K562 (cell line): ENCODE measurements at regions of chr14 and their contacts with region 1.

Region 1: DNA sequence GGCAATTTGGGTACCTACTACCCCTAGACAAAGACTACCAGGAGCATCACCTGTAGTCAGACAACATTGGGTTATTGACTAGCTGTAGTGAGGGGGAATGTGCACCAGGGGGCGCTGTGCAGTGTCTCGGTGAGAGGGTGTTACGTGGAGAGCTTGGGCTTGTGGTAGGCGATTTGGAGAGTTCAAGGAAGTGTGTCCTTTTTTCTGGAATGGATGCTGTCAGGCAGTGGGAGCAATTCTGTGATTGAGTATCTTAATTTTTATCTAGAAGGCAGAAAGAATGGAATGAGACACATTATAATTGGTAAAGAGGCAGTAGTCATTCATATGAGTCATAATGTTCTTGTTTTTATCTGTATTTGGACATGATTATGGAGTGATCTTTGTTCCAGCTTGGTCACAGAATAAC is 187.7 kb downstream of the GALC start:
- DNase-seq: peak; percentile 21 to 43 (median 30)
- ATAC-seq: 0 out of 3 replicates have a peak, but pooled peaks have one; percentile 48
- H3K4me3 ChIP-seq: no peak overlapping the region
- H3K27ac ChIP-seq: no peak overlapping the region
- H3K4me1 ChIP-seq: no peaks in the 10 kb centered on the region
- H3K27me3 ChIP-seq: no peaks in the 10 kb centered on the region
- CTCF ChIP-seq: peak; percentile 20 to 59 (median 28); a peak in 5 of 6 replicates
- EP300 ChIP-seq: no peak
- POLR2A ChIP-seq: no peak
- RAD21 ChIP-seq: 0 out of 4 replicates have a peak, but pooled peaks of 1 of the 2 experiments have one; percentile 5

Region 2: GRCh38 chr14:87667659-87668058 is 137.7 kb before region 1 on chr14:
- CTCF ChIA-PET with region 1: no interaction called
- POLR2A ChIA-PET with region 1: no interaction called
- in situ Hi-C with region 1: no loop called
- intact Hi-C with region 1: no loop called
- DNase-seq: no peak
- ATAC-seq: no peak
- H3K4me3 ChIP-seq: no peak overlapping the region
- H3K27ac ChIP-seq: no peak overlapping the region
- H3K4me1 ChIP-seq: no peaks in the 10 kb centered on the region
- H3K27me3 ChIP-seq: no peaks in the 10 kb centered on the region
- CTCF ChIP-seq: no peak
- EP300 ChIP-seq: no peak
- POLR2A ChIP-seq: no peak
- RAD21 ChIP-seq: no peak

Region 3: GRCh38 chr14:87852107-87852506 is 46.8 kb after region 1 on chr14:
- CTCF ChIA-PET with region 1: no interaction called
- POLR2A ChIA-PET with region 1: no interaction called
- in situ Hi-C with region 1: no loop called
- intact Hi-C with region 1: no loop called
- DNase-seq: no peak
- ATAC-seq: no peak
- H3K4me3 ChIP-seq: no peak overlapping the region
- H3K27ac ChIP-seq: no peak overlapping the region
- H3K4me1 ChIP-seq: no peaks in the 10 kb centered on the region
- H3K27me3 ChIP-seq: no peaks in the 10 kb centered on the region
- CTCF ChIP-seq: no peak
- EP300 ChIP-seq: no peak
- POLR2A ChIP-seq: no peak
- RAD21 ChIP-seq: no peak

Region 4: GRCh38 chr14:87883750-87884149 is 78.4 kb after region 1 on chr14:
- CTCF ChIA-PET with region 1: no interaction called
- POLR2A ChIA-PET with region 1: no interaction called
- in situ Hi-C with region 1: no loop called
- intact Hi-C with region 1: no loop called
- DNase-seq: no peak
- ATAC-seq: no peak
- H3K4me3 ChIP-seq: no peak overlapping the region
- H3K27ac ChIP-seq: no peak overlapping the region
- H3K4me1 ChIP-seq: no peaks in the 10 kb centered on the region
- H3K27me3 ChIP-seq: no peaks in the 10 kb centered on the region
- CTCF ChIP-seq: no peak
- EP300 ChIP-seq: no peak
- POLR2A ChIP-seq: no peak
- RAD21 ChIP-seq: no peak

Region 5: GRCh38 chr14:87896393-87897380 is 91.4 kb after region 1 on chr14:
- CTCF ChIA-PET with region 1: no interaction called
- POLR2A ChIA-PET with region 1: no interaction called
- in situ Hi-C with region 1: no loop called
- intact Hi-C with region 1: loop called (anchors 5 kb)
- DNase-seq: peak; percentile 17 to 44 (median 38)
- ATAC-seq: peak; percentile 82
- H3K4me3 ChIP-seq: no peak overlapping the region
- H3K27ac ChIP-seq: no peak overlapping the region
- H3K4me1 ChIP-seq: no peaks in the 10 kb centered on the region
- H3K27me3 ChIP-seq: no peaks in the 10 kb centered on the region
- CTCF ChIP-seq: peak in 2 of 3 experiments; percentile 42 to 62; a peak in 3 of 6 replicates
- EP300 ChIP-seq: no peak
- POLR2A ChIP-seq: no peak
- RAD21 ChIP-seq: peak; percentile 52 to 69